Esophagus squamous epithelium (tissue), 5 donors: ENCODE measurements at regions of chr16 and their contacts with region 1.

Region 1: DNA sequence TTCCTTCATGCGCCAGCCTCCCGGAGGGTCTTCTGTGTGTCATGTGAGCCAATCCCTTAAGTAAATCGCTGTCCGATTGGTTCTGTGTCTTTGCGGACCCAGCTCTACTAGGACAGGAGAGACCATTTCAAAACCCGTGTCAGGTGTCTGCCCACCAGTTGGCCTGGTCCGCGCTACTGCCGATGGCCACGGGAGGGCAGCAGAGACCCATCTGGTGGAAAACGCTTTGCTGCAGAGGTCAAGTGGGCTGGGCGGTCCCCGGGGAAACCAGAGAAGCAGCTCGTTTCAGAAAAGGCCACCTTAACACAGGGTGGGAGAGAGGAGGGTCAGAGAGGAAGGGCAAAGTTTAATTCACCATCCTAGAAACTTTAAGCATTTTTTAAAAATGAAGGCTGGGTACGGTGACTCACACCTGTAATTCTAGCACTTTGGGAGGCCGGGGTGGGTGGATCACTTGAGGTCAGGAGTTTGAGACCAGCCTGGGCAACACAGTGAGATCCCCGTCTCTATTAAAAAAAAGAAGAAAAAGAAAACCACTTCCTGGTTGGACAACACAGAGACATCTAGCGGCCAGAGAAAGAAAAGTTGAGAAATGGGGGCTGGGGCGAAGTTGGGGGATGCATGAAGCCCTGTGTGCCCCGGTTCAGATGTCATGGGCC is 2.8 kb upstream of the CIBAR2 start:
- DNase-seq: no peak
- H3K4me3 ChIP-seq: peak overlapping the region in 3 of 4 donors; percentile 25 to 47 (median 26)
- H3K27ac ChIP-seq: peak overlapping the region in 2 of 4 donors; percentile 60 to 62
- H3K4me1 ChIP-seq: peaks cover 0 to 10% (median 5%) of the 10 kb centered on the region in 3 donors
- H3K27me3 ChIP-seq: peaks cover 0 to 4% (median 0%) of the 10 kb centered on the region in 4 donors
- CTCF ChIP-seq: peak; percentile 95 to 98 (median 97)
- POLR2A ChIP-seq: no peak

Region 2: GRCh38 chr16:85245307-85246172 is 130.5 kb after region 1 on chr16:
- intact Hi-C with region 1: loop called (anchors 10 kb)
- DNase-seq: no peak
- H3K4me3 ChIP-seq: no peak overlapping the region
- H3K27ac ChIP-seq: no peak overlapping the region
- H3K4me1 ChIP-seq: peaks cover 0 to 9% (median 0%) of the 10 kb centered on the region in 3 donors
- H3K27me3 ChIP-seq: peaks cover 0 to 20% (median 0%) of the 10 kb centered on the region in 4 donors
- CTCF ChIP-seq: peak; percentile 52 to 79 (median 69)
- POLR2A ChIP-seq: no peak